ENCODE measurements at regions of chr17 and their contacts with region 1.

Region 1: DNA sequence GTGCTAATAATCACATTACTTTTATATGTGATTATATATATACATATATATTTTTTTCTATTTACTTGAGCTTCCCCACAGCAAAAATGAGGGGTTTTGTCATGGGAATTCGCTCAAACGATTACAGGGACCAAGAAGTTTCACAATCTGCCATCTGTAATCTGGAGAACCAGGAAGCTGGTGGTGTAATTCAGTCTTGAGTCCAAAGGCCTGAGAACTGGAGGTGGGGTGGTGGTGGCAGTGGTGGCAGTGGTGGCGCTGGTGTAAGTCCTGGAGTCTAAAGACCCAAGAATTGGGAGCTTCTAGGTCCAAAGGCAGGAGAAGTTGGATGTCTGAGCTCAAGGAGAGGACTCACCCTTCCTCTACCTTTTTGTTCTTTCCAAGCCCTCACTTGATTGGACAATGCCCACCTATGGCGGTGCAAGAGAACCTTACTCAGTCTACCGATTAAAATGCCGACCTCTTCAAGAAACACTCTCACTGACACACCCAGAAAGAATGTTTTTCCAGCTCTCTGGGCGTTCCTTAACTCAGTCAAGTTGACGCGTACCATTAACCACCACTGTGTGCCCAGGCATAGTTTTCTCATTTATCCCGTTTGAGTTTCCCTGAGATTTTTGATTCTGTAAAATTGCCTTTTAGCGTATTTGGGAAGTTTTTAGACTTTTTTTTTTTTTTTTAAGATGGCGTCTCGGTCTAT is 31.9 kb downstream of the POLR2A start:
- DNase-seq: no peak
- H3K4me3 Mint-ChIP-seq: no peak overlapping the region
- H3K27ac Mint-ChIP-seq: no peak overlapping the region
- H3K4me1 Mint-ChIP-seq: no peaks in the 10 kb centered on the region
- H3K27me3 Mint-ChIP-seq: no peaks in the 10 kb centered on the region
- CTCF ChIP-seq: no peak

Region 2: GRCh38 chr17:7548585-7549400 is 32.7 kb after region 1 on chr17 and contains the start of gene TNFSF12:
- CTCF ChIA-PET with region 1: interaction called, 22 read pairs
- POLR2A ChIA-PET with region 1: interaction called, 4 read pairs
- intact Hi-C with region 1: no loop called
- DNase-seq: peak; percentile 30
- H3K4me3 Mint-ChIP-seq: peak within 1 kb of the TSS; percentile 62
- H3K27ac Mint-ChIP-seq: no peak within 1 kb of the TSS
- H3K4me1 Mint-ChIP-seq: no peaks in the 10 kb centered on the region
- H3K27me3 Mint-ChIP-seq: peaks cover 2% of the 10 kb centered on the region
- CTCF ChIP-seq: no peak
- total RNA-seq, gene TNFSF12: 3.5 and 3.9 TPM in 2 replicates